ENCODE measurements at regions of chr19 and their contacts with region 1.

Region 1: DNA sequence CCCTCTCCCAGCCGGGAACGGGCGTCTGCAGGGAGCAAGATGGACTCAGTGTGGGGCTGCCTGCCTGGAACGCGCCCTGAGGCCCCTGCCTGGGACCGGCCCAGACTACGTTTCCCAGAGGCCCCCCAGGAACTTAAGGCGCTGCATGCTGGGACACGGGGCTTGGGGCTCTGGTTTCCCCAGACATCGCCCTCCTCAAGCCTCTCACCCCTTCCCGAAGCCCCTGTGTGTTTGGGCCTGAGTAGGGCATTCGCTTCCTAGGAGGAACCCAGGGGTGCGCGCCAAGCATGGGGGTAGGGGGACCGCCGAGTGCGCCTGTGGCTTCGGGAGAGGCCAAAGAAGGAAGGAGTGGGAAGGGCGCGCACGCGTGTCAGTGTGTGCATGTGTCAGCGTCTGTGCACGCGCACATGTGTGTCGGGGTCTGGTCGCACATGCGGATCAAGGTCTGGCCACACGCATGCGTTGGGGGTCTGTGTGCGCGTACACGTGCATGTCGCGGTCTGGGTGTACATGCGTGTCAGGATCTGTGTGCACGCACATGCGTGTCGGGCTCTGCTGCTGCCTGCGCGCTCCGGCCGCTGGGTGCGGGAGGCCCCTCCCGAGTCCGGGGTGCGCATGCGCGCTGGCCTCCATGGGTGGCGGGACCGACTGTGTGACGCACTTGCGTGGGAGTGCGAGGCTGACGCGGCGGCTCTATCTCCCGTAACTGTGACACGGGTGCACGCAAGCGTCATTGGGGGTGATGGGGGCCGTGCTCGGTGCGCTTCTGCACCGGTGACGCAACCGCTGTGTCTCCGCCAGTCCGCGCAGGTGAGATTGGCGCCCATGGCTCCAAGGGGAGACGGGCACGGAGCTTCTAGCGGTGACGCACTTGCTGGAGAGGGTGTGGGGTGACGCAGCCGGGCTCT is 16.2 kb downstream of the ZNF331 start:
- DNase-seq: peak; percentile 95
- H3K4me3 Mint-ChIP-seq: peak overlapping the region; percentile 83
- H3K27ac Mint-ChIP-seq: peak overlapping the region; percentile 95
- H3K4me1 Mint-ChIP-seq: peaks cover 25% of the 10 kb centered on the region
- H3K27me3 Mint-ChIP-seq: no peaks in the 10 kb centered on the region

Region 2: DNA sequence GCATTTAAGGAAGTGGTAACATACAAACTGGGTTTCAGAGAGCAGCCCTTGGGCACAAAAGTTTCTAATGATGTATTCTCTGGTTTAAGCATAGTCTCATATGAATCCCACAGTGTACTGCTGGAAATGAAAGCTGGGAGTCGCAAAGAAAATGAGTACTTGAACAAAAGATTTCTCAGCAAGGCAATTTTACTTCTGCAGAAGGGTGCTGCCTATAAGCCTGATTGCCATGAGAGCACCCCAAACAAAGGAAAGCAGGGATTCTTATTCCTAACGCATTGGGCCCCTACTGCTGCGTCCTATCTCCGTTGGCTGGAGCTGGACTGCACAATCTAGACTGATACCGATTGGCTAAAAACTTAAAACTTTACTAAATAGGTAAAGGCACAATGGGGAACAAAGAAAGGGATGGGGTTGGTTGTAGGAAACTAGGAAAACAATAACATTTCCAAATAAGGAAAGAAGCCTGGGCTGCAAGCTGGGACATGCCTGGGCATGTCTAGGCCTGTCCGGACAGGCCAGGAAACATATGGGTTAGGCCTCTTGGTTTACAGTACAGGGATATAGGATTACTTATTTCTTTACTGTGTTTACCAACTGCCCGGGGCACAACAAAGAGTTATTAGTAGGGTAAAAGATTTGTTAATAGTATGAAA is 259.2 kb before region 1 on chr19:
- CTCF ChIA-PET with region 1: no interaction called
- POLR2A ChIA-PET with region 1: no interaction called
- intact Hi-C with region 1: no loop called
- DNase-seq: no peak
- H3K4me3 Mint-ChIP-seq: no peak overlapping the region
- H3K27ac Mint-ChIP-seq: no peak overlapping the region
- H3K4me1 Mint-ChIP-seq: no peaks in the 10 kb centered on the region
- H3K27me3 Mint-ChIP-seq: no peaks in the 10 kb centered on the region

Region 3: DNA sequence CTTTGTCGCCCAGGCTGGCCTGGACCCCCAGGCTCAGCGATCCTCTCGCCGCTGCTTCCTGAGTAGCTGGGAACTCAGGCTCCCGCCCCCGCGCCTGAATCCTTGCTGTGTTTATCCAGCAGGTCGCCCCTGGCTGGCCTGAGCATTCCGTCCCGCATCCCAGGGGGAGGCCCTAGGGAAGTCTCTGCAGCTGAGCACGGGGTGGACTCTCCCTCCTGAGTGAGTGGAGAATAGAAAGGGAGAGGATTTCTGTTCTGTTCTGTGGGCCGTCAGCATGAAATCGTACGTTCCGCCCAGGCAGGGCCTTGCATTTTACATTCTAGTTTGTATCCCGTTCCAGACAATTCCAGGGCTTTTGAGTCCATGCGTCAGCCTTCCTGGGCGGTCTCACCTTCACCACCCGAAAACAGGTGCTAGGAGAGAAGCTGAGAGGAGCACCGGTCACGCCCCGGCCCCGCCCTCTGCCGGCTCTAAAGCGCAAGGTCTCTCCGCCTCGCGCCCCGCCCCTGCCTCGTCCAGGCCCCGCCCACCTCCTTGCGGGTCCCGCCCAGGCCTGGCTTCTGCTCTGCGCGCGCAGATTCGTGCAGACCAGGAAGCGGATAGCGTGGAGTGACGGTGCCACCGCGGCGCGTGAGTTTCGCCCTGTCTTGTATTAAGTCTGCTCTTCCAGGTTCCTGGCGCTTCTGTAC is 122.6 kb before region 1 on chr19 and contains the start of gene ZNF761:
- CTCF ChIA-PET with region 1: no interaction called
- POLR2A ChIA-PET with region 1: no interaction called
- intact Hi-C with region 1: loop called (anchors 5 kb)
- DNase-seq: peak; percentile 98
- H3K4me3 Mint-ChIP-seq: peak within 1 kb of the TSS; percentile 84
- H3K27ac Mint-ChIP-seq: peak within 1 kb of the TSS; percentile 88
- H3K4me1 Mint-ChIP-seq: peaks cover 22% of the 10 kb centered on the region
- H3K27me3 Mint-ChIP-seq: no peaks in the 10 kb centered on the region
- total RNA-seq, gene ZNF761: 10.6 to 11.3 TPM

Region 4: GRCh38 chr19:53597023-53597422 is 42.9 kb after region 1 on chr19:
- CTCF ChIA-PET with region 1: no interaction called
- POLR2A ChIA-PET with region 1: no interaction called
- intact Hi-C with region 1: no loop called
- DNase-seq: no peak
- H3K4me3 Mint-ChIP-seq: no peak overlapping the region
- H3K27ac Mint-ChIP-seq: no peak overlapping the region
- H3K4me1 Mint-ChIP-seq: no peaks in the 10 kb centered on the region
- H3K27me3 Mint-ChIP-seq: no peaks in the 10 kb centered on the region

Measured in activated CD4-positive, alpha-beta memory T cell treated with anti-CD3 and anti-CD28 coated beads for 36 hours (primary cell).